ENCODE measurements at regions of chr5 and their contacts with region 1.

Region 1: DNA sequence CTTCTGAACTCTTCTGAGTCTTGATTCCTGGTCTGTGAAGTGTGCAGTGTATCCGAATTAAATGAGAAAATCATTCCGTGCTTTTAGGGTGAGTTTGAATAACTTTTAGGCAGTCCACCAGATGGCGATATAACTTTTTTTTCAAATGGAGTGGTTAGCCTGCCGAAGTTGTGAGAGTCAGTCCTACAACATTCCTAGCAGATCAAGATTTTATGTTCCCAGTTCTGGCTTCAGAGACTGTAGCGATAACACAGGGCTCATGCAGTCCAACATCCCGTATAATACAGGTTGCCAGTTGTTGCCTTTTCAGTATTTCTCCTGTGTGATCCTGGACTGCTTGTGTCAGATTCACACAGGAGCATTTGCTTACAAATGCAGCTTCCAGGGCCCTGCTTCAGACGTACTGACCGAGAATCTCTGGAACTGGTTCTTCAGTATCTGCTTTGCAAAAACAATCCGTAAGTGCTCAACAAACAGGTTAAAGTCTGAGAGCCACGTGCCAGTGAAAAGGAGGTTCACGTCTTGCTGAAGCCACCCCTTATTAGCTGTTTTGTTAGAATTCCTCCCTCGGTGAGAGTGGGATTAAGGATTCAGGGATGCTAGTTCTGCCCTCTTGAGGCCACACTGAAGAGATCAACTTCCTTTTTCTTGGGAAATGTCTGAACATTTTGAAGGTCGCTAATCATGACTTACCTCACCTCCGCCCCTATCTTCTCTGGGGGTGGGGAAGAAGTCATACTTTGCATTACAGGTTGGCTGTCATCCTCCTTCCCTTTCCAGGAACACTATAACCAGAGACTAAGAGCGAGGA is 22.8 kb downstream of the SMIM3 start:
- DNase-seq: peak in 1 of 2 experiments; percentile 75
- H3K4me3 ChIP-seq: peak overlapping the region; percentile 52 to 60 (median 56)
- H3K27ac ChIP-seq: 0 out of 2 replicates have a peak overlapping the region, but pooled peaks have one; percentile 5
- H3K4me1 ChIP-seq: peaks cover 0 to 3% (median 0%) of the 10 kb centered on the region in 4 experiments; a peak in 1 of 7 replicates
- H3K27me3 ChIP-seq: no peaks in the 10 kb centered on the region
- CTCF ChIP-seq: peak in 2 of 3 experiments; percentile 57 to 72; a peak in 3 of 4 replicates
- EP300 ChIP-seq: no peak
- POLR2A ChIP-seq: no peak
- RAD21 ChIP-seq: peak; percentile 62 to 70

Region 2: DNA sequence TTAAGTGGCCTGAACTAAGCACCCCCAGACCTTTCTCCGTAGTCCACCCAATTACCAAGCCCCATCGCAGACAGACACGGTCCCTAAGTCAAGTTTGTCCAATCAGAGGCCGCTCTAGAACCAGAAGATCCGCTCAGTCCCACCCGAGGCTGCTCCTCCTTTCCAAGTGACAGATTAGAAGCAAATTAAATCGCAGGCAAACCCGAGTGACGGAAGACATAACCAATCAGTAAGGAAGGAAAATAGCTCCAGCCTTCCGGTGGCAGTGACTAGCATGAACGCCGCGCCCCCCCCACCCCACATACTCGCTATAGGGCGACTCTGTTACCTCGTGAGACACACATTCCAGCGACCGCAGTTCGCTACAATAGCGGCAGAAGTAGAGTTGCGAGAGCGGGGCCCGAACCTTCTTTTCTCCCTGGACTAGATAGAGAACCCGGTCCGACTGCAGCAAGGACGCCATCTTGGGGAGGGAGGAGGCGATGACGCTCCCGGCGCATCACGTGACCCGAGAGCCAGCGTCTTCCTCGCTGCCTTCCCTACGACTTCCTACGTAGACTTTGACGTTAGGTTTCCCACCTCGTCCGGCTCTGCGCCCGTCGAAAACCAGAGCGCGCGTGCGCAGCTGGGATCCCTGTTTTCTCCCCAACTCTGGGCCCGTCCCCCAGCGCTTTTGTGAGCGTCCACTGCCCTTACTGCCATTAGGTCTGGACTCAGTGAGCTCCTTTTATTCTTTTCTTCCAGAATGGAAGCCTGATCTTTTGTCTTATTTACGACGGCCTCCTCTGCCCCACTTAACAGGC is 42.6 kb before region 1 on chr5 and contains the start of gene DCTN4:
- CTCF ChIA-PET with region 1: interaction called, 12 read pairs
- POLR2A ChIA-PET with region 1: interaction called, 6 read pairs
- DNase-seq: peak; percentile 95
- H3K4me3 ChIP-seq: peak within 1 kb of the TSS; percentile 77 to 98 (median 81)
- H3K27ac ChIP-seq: peak within 1 kb of the TSS; percentile 92
- H3K4me1 ChIP-seq: peaks cover 0 to 2% (median 0%) of the 10 kb centered on the region in 4 experiments; a peak in 1 of 7 replicates
- H3K27me3 ChIP-seq: peaks cover 0 to 3% (median 0%) of the 10 kb centered on the region in 4 experiments; a peak in 1 of 7 replicates
- CTCF ChIP-seq: 0 out of 4 replicates have a peak, but pooled peaks of 1 of the 3 experiments have one; percentile 16
- EP300 ChIP-seq: no peak
- POLR2A ChIP-seq: peak; percentile 85 to 88
- RAD21 ChIP-seq: no peak
- total RNA-seq, gene DCTN4: 42.5 and 42.7 TPM in 2 replicates

Region 3: DNA sequence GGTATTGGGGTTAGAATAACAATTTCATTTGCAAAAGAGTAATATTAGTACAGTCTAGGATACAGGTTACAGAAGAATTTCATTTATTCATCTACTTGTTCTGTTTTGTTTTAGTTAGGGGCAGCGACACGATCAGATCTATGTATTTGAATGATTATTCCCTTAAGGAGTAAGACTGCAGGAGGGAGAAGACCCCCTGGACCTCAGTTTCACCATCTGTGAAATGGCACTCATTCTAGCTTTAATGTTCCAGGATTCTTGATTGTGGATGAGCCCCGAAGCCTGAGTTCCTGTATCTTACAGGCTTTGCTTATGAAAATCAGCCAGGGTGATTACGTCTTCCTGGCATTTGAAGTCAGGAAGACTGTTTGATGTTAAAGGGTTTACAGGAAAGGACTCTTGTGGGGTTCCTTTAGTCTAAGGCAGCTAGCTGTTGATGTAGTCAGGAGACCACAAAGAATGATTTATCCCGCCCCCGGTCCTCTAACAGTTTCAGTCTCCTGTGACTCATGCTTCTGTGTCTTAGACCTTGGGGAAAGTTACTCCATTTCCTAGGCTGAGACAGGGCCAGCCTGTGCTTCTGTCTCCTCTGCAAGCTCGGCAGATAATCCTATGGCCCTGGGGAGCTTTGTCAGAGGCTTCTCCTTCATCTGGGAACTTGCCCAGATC is 11.2 kb before region 1 on chr5:
- CTCF ChIA-PET with region 1: interaction called, 32 read pairs
- POLR2A ChIA-PET with region 1: interaction called, 3 read pairs
- DNase-seq: no peak
- H3K4me3 ChIP-seq: no peak overlapping the region
- H3K27ac ChIP-seq: no peak overlapping the region
- H3K4me1 ChIP-seq: 0 out of 7 replicates have a peak, but pooled peaks cover 0 to 5% (median 0%) of the 10 kb centered on the region in 4 experiments
- H3K27me3 ChIP-seq: no peaks in the 10 kb centered on the region
- CTCF ChIP-seq: no peak
- EP300 ChIP-seq: no peak
- POLR2A ChIP-seq: no peak
- RAD21 ChIP-seq: no peak

Region 4: DNA sequence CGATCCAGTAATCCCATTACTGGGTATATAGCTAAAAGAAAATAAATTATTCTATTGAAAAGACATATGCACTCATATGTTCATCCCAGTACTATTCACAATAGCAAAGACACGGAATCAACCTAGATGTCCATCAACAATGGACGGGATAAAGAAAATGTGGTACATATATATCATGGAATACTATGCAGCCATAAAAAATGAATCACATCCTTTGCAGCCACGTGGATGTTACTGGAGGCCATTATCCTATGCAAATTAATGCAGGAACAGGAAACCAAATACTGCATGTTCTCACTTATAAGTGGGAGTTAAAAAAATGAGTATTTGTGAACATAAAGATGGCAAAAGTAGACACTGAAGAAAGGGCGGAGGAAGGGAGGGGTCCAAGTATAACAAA is 28.4 kb after region 1 on chr5:
- CTCF ChIA-PET with region 1: interaction called, 24 read pairs
- POLR2A ChIA-PET with region 1: no interaction called
- DNase-seq: no peak
- H3K4me3 ChIP-seq: no peak overlapping the region
- H3K27ac ChIP-seq: no peak overlapping the region
- H3K4me1 ChIP-seq: no peaks in the 10 kb centered on the region
- H3K27me3 ChIP-seq: no peaks in the 10 kb centered on the region
- CTCF ChIP-seq: no peak
- EP300 ChIP-seq: no peak
- POLR2A ChIP-seq: no peak
- RAD21 ChIP-seq: no peak

Region 5: DNA sequence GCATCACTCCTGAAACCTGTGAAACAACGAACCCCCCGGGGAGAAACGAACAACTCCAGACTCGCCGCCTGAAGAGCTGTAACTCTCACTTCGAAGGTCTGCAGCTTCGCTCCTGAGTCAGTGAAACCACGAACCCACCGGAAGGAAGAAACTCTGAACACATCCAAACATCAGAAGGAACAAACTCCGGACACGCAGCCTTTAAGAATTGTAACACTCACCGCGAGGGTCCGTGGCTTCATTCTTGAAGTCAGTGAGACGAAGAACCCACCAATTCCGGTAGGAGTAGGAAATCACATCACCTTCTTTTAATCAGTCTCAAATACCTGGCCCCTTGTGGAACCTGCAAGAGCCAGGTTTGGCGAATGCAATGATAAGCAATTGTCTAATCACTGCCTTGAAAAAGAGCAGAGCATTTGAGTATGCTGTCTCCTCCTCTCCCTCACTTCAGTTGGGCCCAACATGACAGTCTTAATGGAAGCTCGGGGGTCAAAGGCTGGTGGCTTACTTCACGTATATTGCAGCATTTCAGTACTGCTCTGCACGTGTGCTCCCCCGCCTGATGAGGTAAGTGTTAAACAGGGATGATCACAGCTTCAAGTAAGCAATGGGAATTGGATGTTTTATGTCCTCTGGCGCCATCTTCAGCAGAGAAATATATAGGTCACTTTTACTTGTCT is 45.5 kb after region 1 on chr5:
- CTCF ChIA-PET with region 1: interaction called, 88 read pairs
- POLR2A ChIA-PET with region 1: interaction called, 3 read pairs
- DNase-seq: peak; percentile 27 to 51
- H3K4me3 ChIP-seq: no peak overlapping the region
- H3K27ac ChIP-seq: no peak overlapping the region
- H3K4me1 ChIP-seq: peaks cover 0 to 3% (median 0%) of the 10 kb centered on the region in 4 experiments; a peak in 1 of 7 replicates
- H3K27me3 ChIP-seq: peaks cover 0 to 5% (median 4%) of the 10 kb centered on the region in 4 experiments; a peak in 4 of 7 replicates
- CTCF ChIP-seq: peak in 2 of 3 experiments; percentile 80; a peak in 3 of 4 replicates
- EP300 ChIP-seq: no peak
- POLR2A ChIP-seq: no peak
- RAD21 ChIP-seq: peak; percentile 89 to 93

Region 6: GRCh38 chr5:150918613-150919012 is 117.3 kb after region 1 on chr5:
- CTCF ChIA-PET with region 1: no interaction called
- POLR2A ChIA-PET with region 1: no interaction called
- DNase-seq: no peak
- H3K4me3 ChIP-seq: no peak overlapping the region
- H3K27ac ChIP-seq: no peak overlapping the region
- H3K4me1 ChIP-seq: no peaks in the 10 kb centered on the region
- H3K27me3 ChIP-seq: no peaks in the 10 kb centered on the region
- CTCF ChIP-seq: no peak
- EP300 ChIP-seq: no peak
- POLR2A ChIP-seq: no peak
- RAD21 ChIP-seq: no peak

Measured in H1 (cell line).